ENCODE measurements at regions of chr5 and their contacts with region 1.

Region 1: DNA sequence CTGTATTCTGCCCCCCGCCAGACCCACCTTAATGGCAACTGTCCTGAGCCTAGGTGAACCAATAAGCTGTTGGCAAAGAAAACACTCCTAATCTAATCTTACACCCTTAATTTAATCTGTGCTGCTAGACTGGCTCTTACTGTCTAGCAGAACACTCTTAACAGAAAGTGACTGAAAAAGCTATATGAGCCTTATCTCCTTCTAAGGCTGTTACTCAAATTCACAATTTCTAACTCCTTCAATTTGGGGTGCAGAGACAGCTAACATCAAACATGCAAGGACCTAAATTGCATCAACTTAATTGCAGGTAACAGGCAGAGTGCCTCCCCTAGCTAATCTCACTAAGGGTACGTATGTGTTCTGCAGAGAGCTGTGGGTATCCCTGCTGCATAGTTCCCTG is 49.5 kb upstream of the MAP1B start:
- DNase-seq: no peak
- ATAC-seq: no peak
- H3K4me3 ChIP-seq: no peak overlapping the region
- H3K27ac ChIP-seq: no peak overlapping the region
- H3K4me1 ChIP-seq: no peaks in the 10 kb centered on the region
- H3K27me3 ChIP-seq: peaks cover 0 to 3% (median 0%) of the 10 kb centered on the region in 3 donors
- CTCF ChIP-seq: no peak

Region 2: GRCh38 chr5:71996789-71997188 is 61.0 kb before region 1 on chr5:
- intact Hi-C with region 1: loop called in 1 of 2 experiments (anchors 10 kb)
- DNase-seq: no peak
- ATAC-seq: no peak
- H3K4me3 ChIP-seq: no peak overlapping the region
- H3K27ac ChIP-seq: no peak overlapping the region
- H3K4me1 ChIP-seq: no peaks in the 10 kb centered on the region
- H3K27me3 ChIP-seq: no peaks in the 10 kb centered on the region
- CTCF ChIP-seq: no peak

Region 3: DNA sequence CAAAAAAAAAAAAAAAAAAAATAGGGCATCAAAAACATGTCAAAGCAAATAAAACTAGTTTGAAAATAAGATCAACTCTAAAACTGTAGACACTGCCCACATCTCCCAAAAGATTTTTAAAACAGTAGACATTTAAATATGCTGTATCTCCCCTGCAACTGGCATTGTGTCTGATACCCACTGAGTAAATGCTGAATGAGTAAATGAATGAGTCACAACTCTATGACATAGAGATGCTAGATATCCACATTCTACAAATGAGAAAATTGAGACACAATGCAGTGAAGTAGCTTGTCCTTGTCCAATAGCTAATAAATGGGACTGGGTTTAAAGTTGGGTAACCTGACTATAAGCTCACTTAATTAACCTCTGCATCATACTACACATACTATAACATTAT is 35.4 kb after region 1 on chr5:
- intact Hi-C with region 1: no loop called
- DNase-seq: no peak
- ATAC-seq: no peak
- H3K4me3 ChIP-seq: no peak overlapping the region
- H3K27ac ChIP-seq: no peak overlapping the region
- H3K4me1 ChIP-seq: no peaks in the 10 kb centered on the region
- H3K27me3 ChIP-seq: peaks cover 0 to 2% (median 0%) of the 10 kb centered on the region in 3 donors
- CTCF ChIP-seq: no peak